H1 (cell line): ENCODE measurements at regions of chr17 and their contacts with region 1.

Region 1: DNA sequence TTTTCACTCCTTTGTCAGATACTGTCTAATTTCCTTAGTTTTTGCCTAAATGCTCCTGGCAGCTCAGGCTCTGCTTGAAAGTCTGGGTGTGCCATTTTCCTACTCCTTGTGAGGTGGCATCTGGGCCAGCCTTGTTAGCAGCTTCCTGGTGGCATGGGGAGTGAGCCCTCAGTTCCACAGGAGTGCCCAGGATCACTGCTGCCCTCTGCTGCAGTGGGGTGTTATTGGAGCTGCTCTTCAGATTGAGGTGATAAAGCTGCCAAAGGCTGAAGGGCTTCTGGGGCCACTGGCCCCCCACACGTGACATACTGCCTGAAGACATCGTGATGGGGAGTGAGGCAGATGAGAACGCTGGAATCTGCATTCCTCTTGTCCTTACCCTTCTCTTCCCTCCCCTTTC is 27.4 kb downstream of the CEP95 start:
- DNase-seq: no peak
- H3K4me3 ChIP-seq: no peak overlapping the region
- H3K27ac ChIP-seq: no peak overlapping the region
- H3K4me1 ChIP-seq: no peaks in the 10 kb centered on the region
- H3K27me3 ChIP-seq: no peaks in the 10 kb centered on the region
- CTCF ChIP-seq: peak in 2 of 3 experiments; percentile 10 to 12; a peak in 2 of 4 replicates
- EP300 ChIP-seq: no peak
- POLR2A ChIP-seq: no peak
- RAD21 ChIP-seq: 0 out of 4 replicates have a peak, but pooled peaks of 1 of the 2 experiments have one; percentile 1

Region 2: GRCh38 chr17:64547319-64547718 is 13.1 kb after region 1 on chr17:
- CTCF ChIA-PET with region 1: interaction called, 13 read pairs
- POLR2A ChIA-PET with region 1: interaction called, 7 read pairs
- DNase-seq: no peak
- H3K4me3 ChIP-seq: no peak overlapping the region
- H3K27ac ChIP-seq: no peak overlapping the region
- H3K4me1 ChIP-seq: peaks cover 0 to 4% (median 0%) of the 10 kb centered on the region in 4 experiments; a peak in 2 of 7 replicates
- H3K27me3 ChIP-seq: no peaks in the 10 kb centered on the region
- CTCF ChIP-seq: peak in 2 of 3 experiments; percentile 18 to 25; a peak in 2 of 4 replicates
- EP300 ChIP-seq: no peak
- POLR2A ChIP-seq: no peak
- RAD21 ChIP-seq: no peak

Region 3: DNA sequence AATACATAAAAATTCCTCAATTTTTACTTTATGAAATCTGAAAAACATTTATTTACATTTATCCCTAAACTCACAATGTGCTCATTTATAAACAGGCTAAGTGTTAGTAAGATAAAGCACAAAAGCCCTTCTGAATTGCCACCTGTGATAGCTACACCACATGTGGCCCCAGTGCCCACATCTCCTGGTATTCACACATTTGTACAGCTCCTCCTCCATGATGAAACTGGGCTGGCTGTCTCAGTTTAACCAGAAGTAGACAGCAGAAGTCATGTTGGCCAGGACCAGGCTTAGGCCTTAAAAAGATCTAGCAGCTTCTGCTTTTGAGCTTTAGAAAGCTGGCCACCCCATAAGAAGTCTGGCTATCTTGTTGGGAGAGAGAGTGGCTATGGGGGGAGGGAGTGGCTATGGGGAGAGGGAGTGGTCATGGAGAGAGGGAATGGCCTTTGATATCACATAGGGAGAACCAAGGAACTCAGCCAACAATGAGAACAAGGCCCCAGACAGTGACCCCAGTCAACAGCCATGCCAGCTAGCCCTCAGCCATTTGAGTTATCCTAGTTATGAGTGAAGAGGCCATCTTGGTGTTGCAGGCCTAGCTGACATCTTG is 20.0 kb after region 1 on chr17:
- CTCF ChIA-PET with region 1: interaction called, 10 read pairs
- POLR2A ChIA-PET with region 1: interaction called, 7 read pairs
- DNase-seq: no peak
- H3K4me3 ChIP-seq: no peak overlapping the region
- H3K27ac ChIP-seq: no peak overlapping the region
- H3K4me1 ChIP-seq: peaks cover 0 to 4% (median 0%) of the 10 kb centered on the region in 4 experiments; a peak in 1 of 7 replicates
- H3K27me3 ChIP-seq: no peaks in the 10 kb centered on the region
- CTCF ChIP-seq: no peak
- EP300 ChIP-seq: no peak
- POLR2A ChIP-seq: no peak
- RAD21 ChIP-seq: no peak